Endothelial cell of umbilical vein (primary cell): ENCODE measurements at regions of chr22 and their contacts with region 1.

Region 1: GRCh38 chr22:46737976-46738646 is at the start of gene CERK:
- DNase-seq: peak; percentile 73
- H3K4me3 ChIP-seq: peak within 1 kb of the TSS; percentile 60 to 97 (median 75)
- H3K27ac ChIP-seq: peak within 1 kb of the TSS; percentile 90
- H3K4me1 ChIP-seq: peaks cover 39% of the 10 kb centered on the region
- H3K27me3 ChIP-seq: no peaks in the 10 kb centered on the region
- CTCF ChIP-seq: no peak
- POLR2A ChIP-seq: peak; percentile 69
- total RNA-seq, gene CERK: 88.0 and 104 TPM in 2 replicates

Region 2: DNA sequence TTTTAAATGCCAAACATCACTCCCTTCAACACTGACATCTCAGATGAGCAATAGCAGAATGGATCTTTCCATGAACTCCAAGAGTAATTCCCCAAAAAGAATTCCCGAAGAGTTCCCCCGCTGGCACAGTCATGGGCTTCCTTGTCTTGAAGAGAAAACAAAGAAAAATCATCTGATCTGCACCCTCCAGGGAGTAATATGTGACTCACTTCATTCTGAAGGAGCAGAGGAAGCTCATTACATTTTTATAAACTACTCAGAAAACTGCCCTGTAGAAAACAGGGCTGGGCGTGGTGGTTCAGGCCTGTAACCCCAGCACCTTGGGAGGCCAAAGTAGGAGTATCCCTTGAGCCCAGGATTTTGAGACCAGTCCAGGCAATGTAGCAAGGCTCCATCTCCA is 236.4 kb before region 1 on chr22:
- CTCF ChIA-PET with region 1: no interaction called
- POLR2A ChIA-PET with region 1: no interaction called
- dilution Hi-C with region 1: no loop called
- intact Hi-C with region 1: no loop called
- DNase-seq: peak; percentile 77
- H3K4me3 ChIP-seq: no peak overlapping the region
- H3K27ac ChIP-seq: peak overlapping the region; percentile 40
- H3K4me1 ChIP-seq: peaks cover 4% of the 10 kb centered on the region
- H3K27me3 ChIP-seq: no peaks in the 10 kb centered on the region
- CTCF ChIP-seq: no peak
- POLR2A ChIP-seq: no peak

Region 3: DNA sequence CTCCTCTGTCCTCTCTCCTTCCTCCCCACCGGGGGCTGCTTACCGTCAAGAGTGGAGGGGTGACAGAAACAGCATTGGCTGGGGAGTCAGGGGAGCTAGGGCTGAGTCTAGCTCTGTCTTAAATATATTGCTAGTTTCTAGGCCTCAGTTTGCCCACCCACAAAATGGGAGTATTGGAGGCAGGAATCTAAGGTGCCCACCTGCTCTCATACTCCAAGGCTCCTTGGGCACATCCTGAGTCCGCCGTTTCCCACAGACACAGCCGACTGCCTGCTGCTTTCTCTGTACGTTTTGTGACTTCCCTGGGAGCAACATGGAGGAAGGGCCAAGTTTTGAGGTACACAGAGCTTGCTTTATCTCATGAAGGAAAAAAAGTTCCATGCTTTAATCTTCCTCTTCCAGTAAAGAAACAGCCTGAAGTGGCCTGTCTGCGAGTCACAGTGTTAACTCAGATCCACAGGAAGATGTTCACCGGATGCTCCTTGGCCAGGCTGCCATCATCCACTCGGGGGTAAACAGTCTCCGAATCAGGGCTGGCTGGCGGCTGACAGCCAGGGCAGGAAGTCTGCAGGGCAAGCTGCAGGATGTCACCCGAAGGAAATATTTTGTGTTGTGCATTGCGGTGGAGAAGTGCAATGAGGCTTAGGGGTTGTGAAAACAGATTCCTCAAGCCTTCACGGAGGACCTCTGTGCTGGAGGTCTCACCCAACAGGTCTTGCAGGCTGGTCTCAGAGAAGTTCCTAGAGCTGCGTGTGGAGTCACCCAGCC is 11.0 kb after region 1 on chr22:
- CTCF ChIA-PET with region 1: interaction called, 9 read pairs
- POLR2A ChIA-PET with region 1: no interaction called
- dilution Hi-C with region 1: no loop called
- intact Hi-C with region 1: loop called (anchors 1 kb)
- DNase-seq: peak; percentile 91
- H3K4me3 ChIP-seq: no peak overlapping the region
- H3K27ac ChIP-seq: peak overlapping the region; percentile 90
- H3K4me1 ChIP-seq: peaks cover 46% of the 10 kb centered on the region
- H3K27me3 ChIP-seq: no peaks in the 10 kb centered on the region
- CTCF ChIP-seq: no peak
- POLR2A ChIP-seq: peak; percentile 37

Region 4: GRCh38 chr22:46754110-46754799 is 16.1 kb after region 1 on chr22:
- CTCF ChIA-PET with region 1: interaction called, 40 read pairs
- POLR2A ChIA-PET with region 1: no interaction called
- dilution Hi-C with region 1: no loop called
- intact Hi-C with region 1: loop called (anchors 1 kb)
- DNase-seq: peak; percentile 99
- H3K4me3 ChIP-seq: no peak overlapping the region
- H3K27ac ChIP-seq: peak overlapping the region; percentile 95
- H3K4me1 ChIP-seq: peaks cover 52% of the 10 kb centered on the region
- H3K27me3 ChIP-seq: no peaks in the 10 kb centered on the region
- CTCF ChIP-seq: no peak
- POLR2A ChIP-seq: no peak